Left ventricle myocardium superior (tissue), 1 donor: ENCODE measurements at regions of chr20 and their contacts with region 1.

Region 1: GRCh38 chr20:35146920-35147574 is at the start of gene EDEM2:
- DNase-seq: peak; percentile 96
- ATAC-seq: peak; percentile 93
- total RNA-seq, gene EDEM2: 9.7 TPM

Region 2: GRCh38 chr20:35092524-35093266 is 54.4 kb before region 1 on chr20 and contains the start of gene TRPC4AP:
- intact Hi-C with region 1: loop called (anchors 10 kb)
- DNase-seq: peak; percentile 95
- ATAC-seq: peak; percentile 95
- total RNA-seq, gene TRPC4AP: 33.7 TPM

Region 3: GRCh38 chr20:35207950-35208611 is 61.0 kb after region 1 on chr20:
- intact Hi-C with region 1: loop called (anchors 2 kb)
- DNase-seq: peak; percentile 73
- ATAC-seq: peak; percentile 97

Region 4: DNA sequence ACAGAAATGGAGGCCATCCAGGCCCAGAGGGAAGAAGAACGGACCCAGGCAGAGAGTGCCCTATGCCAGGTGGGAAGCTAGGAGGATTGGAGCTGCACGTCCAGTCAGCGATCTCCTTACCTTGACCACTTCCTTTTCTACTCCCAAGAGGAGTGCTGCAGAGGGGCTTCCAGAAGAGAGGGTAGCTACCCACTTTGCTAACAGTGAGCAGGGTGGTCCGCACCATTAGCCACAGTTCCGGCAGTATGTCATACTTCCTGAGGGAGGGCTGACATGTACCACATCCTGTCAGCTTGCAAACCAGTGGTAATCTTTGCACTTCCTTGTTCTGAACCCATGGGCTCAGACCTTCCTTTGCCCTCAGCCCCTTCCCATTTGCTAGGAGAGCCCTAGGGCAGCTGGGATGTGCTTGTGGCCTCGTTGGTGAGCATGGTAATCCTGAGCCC is 343.7 kb after region 1 on chr20:
- intact Hi-C with region 1: no loop called
- DNase-seq: no peak
- ATAC-seq: peak; percentile 68